Activated CD8-positive, alpha-beta memory T cell treated with anti-CD3 and anti-CD28 coated beads, Interleukin-2, amount 10 ng/mL, durations not matched to agents 7 days and 5 days (primary cell): ENCODE measurements at regions of chr15 and their contacts with region 1.

Region 1: GRCh38 chr15:66851226-66852071 is 149.4 kb downstream of the SMAD6 start:
- DNase-seq: peak; percentile 82
- ATAC-seq: peak; percentile 99
- H3K4me3 Mint-ChIP-seq: no peak overlapping the region
- H3K27ac Mint-ChIP-seq: no peak overlapping the region
- H3K4me1 Mint-ChIP-seq: peaks cover 4% of the 10 kb centered on the region
- H3K27me3 Mint-ChIP-seq: peaks cover 23% of the 10 kb centered on the region

Region 2: DNA sequence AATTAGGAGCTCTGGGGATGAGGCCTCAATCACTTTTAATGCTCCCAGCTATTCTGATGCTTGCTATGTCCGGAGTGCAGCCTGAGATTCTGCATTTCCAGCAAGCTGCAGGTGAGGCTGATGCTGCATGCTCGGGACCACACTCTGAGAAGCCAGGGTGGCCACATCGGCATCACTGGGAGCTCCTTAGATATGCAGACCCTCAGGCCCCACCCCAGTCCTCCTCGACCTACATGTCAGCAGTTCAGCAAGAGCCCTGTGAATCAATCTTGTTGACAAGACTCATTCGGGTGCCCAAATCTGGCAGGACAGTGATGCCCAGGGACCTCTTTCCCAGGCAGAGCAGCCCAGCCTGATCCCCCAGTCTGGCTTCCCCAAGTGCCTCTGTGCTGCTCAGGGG is 241.6 kb before region 1 on chr15:
- CTCF ChIA-PET with region 1: interaction called, 77 read pairs
- DNase-seq: no peak
- ATAC-seq: no peak
- H3K4me3 Mint-ChIP-seq: no peak overlapping the region
- H3K27ac Mint-ChIP-seq: no peak overlapping the region
- H3K4me1 Mint-ChIP-seq: no peaks in the 10 kb centered on the region
- H3K27me3 Mint-ChIP-seq: peaks cover 2% of the 10 kb centered on the region

Region 3: GRCh38 chr15:66706225-66706732 is 145.2 kb before region 1 on chr15:
- CTCF ChIA-PET with region 1: interaction called, 10 read pairs
- DNase-seq: no peak
- ATAC-seq: no peak
- H3K4me3 Mint-ChIP-seq: no peak overlapping the region
- H3K27ac Mint-ChIP-seq: no peak overlapping the region
- H3K4me1 Mint-ChIP-seq: peaks cover 11% of the 10 kb centered on the region
- H3K27me3 Mint-ChIP-seq: peaks cover 29% of the 10 kb centered on the region

Region 4: GRCh38 chr15:66862878-66863335 is 11.5 kb after region 1 on chr15:
- CTCF ChIA-PET with region 1: interaction called, 33 read pairs
- DNase-seq: peak; percentile 82
- ATAC-seq: peak; percentile 79
- H3K4me3 Mint-ChIP-seq: no peak overlapping the region
- H3K27ac Mint-ChIP-seq: no peak overlapping the region
- H3K4me1 Mint-ChIP-seq: peaks cover 3% of the 10 kb centered on the region
- H3K27me3 Mint-ChIP-seq: peaks cover 14% of the 10 kb centered on the region

Region 5: DNA sequence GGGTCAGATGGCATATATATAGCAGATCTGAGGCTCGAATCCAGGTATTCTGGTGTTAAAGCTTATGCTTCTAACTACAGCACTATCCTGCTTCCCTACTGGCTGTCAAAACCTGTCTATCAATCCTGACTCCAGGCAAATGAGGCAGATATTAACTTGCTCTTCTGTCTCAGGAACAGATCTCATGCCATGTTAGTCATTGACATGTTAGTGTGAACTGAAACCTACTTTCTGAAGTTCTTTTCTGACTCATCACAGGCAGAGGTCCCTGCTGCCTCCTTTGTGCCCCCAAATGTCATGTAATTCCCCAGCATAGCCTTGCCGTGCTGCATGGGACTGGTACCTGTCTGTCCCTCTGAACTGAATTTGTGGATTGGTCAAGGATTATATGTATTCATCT is 88.9 kb after region 1 on chr15:
- CTCF ChIA-PET with region 1: no interaction called
- DNase-seq: no peak
- ATAC-seq: peak; percentile 71
- H3K4me3 Mint-ChIP-seq: no peak overlapping the region
- H3K27ac Mint-ChIP-seq: no peak overlapping the region
- H3K4me1 Mint-ChIP-seq: peaks cover 21% of the 10 kb centered on the region
- H3K27me3 Mint-ChIP-seq: peaks cover 2% of the 10 kb centered on the region

Region 6: GRCh38 chr15:67307156-67307555 is 455.7 kb after region 1 on chr15:
- CTCF ChIA-PET with region 1: no interaction called
- DNase-seq: no peak
- ATAC-seq: peak; percentile 87
- H3K4me3 Mint-ChIP-seq: no peak overlapping the region
- H3K27ac Mint-ChIP-seq: no peak overlapping the region
- H3K4me1 Mint-ChIP-seq: peaks cover 11% of the 10 kb centered on the region
- H3K27me3 Mint-ChIP-seq: peaks cover 20% of the 10 kb centered on the region